Uterus (tissue), 4 donors: ENCODE measurements at regions of chr7 and their contacts with region 1.

Region 1: GRCh38 chr7:76179686-76180085 is 22.0 kb upstream of the SRRM3 start:
- DNase-seq: no peak
- H3K4me3 ChIP-seq: no peak overlapping the region
- H3K27ac ChIP-seq: no peak overlapping the region
- H3K4me1 ChIP-seq: no peaks in the 10 kb centered on the region
- H3K27me3 ChIP-seq: no peaks in the 10 kb centered on the region
- CTCF ChIP-seq: no peak
- POLR2A ChIP-seq: no peak

Region 2: GRCh38 chr7:76314042-76314721 is 134.5 kb after region 1 on chr7:
- intact Hi-C with region 1: loop called (anchors 1 kb)
- DNase-seq: peak; percentile 97 to 98
- H3K4me3 ChIP-seq: no peak overlapping the region
- H3K27ac ChIP-seq: peak overlapping the region; percentile 69
- H3K4me1 ChIP-seq: no peaks in the 10 kb centered on the region
- H3K27me3 ChIP-seq: no peaks in the 10 kb centered on the region
- CTCF ChIP-seq: peak; percentile 100
- POLR2A ChIP-seq: peak; percentile 27 to 54